BJ (cell line): ENCODE measurements at regions of chr16 and their contacts with region 1.

Region 1: GRCh38 chr16:30844671-30845449 is 49.0 kb downstream of the BCL7C start:
- DNase-seq: peak; percentile 30
- H3K4me3 ChIP-seq: no peak overlapping the region
- H3K27me3 ChIP-seq: no peaks in the 10 kb centered on the region
- CTCF ChIP-seq: peak; percentile 91

Region 2: DNA sequence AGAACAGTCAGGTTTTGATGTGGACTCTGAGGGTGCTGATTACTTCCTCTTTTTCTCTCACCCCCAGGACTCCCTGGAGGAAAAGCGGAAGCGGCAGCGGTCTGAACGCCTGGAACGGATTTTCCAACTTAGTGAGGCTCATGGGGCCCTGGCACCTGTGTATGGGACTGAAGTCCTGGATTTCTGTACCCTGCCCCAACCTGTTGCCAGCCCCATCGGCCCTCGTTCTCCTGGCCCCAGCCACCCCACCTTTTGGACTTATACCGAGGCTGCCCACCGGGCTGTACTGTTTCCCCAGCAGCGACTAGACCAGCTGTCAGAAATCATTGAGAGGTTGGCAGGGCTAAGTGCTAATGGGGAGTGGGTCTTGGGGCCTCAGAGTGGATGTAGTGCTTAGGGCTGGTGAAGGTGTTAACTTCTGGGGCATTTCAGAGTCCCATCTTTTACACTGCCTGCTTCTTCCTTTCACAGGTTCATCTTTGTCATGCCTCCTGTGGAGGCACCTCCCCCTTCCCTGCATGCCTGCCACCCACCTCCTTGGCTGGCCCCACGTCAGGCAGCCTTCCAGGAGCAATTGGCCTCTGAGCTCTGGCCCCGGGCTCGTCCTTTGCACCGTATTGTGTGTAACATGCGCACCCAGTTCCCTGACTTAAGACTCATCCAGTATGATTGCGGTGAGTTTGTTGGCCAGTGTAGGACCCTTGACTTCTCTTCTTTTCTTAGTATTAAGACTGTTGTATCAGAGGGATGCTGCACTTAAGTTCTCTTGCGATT is 115.8 kb before region 1 on chr16:
- CTCF ChIA-PET with region 1: no interaction called
- POLR2A ChIA-PET with region 1: no interaction called
- DNase-seq: no peak
- H3K4me3 ChIP-seq: no peak overlapping the region
- H3K27me3 ChIP-seq: no peaks in the 10 kb centered on the region
- CTCF ChIP-seq: no peak

Region 3: GRCh38 chr16:30747799-30748634 is 96.8 kb before region 1 on chr16 and contains the start of gene PHKG2:
- CTCF ChIA-PET with region 1: no interaction called
- POLR2A ChIA-PET with region 1: no interaction called
- DNase-seq: peak; percentile 95
- H3K4me3 ChIP-seq: peak within 1 kb of the TSS; percentile 99
- H3K27me3 ChIP-seq: no peaks in the 10 kb centered on the region
- CTCF ChIP-seq: no peak
- polyA plus RNA-seq, gene PHKG2: 24.9 and 32.4 TPM in 2 replicates

Region 4: DNA sequence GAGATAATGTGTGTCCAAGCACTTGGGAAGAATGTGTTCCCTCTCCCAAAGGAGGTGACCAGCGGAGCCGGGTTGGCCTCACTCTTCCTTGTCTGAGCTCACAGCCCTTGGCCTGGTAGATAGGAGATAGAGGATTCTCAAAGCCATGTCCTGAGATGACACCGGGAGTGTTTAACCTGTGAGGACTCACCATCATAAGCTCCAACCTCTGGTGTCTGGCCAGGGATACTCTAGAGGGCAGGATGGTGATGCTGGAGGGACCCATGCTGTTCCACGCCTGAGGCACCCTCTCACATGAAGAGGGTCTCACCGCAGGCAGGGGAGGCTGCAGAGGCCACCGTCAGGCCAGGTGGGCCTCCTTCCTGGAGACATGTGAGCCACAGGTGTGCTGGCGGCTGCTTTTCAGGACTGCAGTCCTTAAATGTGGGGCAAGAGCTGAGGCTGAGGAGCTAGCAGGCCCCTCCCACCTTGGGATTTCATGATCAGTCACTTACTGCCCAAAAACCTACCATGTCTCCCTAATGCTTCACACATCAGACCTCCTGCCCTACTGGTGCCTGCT is 51.3 kb before region 1 on chr16:
- CTCF ChIA-PET with region 1: no interaction called
- POLR2A ChIA-PET with region 1: no interaction called
- DNase-seq: no peak
- H3K4me3 ChIP-seq: no peak overlapping the region
- H3K27me3 ChIP-seq: peaks cover 1% of the 10 kb centered on the region; the same call in 1 of the 2 replicates
- CTCF ChIP-seq: no peak

Region 5: DNA sequence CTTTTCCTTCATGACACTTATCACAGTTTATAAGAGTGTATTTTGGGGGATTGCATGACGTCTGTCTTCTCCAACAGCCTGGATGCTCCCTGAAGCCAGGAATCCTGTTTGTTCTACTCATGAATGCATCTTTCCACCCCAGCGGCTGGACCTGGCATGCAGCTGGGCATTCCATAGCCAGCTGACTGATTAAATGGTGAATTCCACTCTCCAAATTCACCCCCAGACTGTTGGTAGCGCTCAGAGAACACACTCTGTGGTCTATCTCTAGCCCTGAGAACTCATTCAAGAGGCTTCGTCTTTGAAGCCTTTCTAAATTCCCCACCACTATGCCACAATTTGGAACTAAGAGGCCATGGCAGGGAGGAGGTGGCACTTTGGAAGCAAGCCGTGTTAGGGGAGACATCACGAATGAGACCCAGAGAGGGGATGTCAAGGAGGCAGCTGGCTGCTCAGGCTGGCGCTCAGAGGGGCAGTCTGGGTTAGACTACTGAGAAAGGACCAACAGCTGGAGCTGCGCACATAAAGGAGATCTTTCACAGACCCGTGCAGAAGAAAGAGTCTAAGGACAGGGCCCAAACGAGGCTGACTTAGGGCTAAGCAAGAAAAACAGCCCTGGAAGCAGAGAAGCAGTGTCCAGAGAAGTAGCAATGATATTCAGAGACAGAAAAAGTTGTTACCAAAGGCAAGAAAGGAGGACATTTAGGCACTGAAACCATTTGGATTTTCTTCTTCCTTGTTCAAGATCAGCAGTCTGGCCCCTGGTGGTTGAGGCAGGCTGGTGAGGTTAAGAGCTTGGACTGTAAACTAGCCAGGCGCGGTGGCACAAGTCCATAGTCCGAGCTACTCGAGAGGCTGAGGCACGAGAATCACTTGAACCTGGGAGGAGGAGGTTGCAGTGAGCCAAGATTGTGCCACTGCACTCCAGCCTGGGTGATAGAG is 15.5 kb before region 1 on chr16:
- CTCF ChIA-PET with region 1: interaction called, 11 read pairs
- POLR2A ChIA-PET with region 1: no interaction called
- DNase-seq: no peak
- H3K4me3 ChIP-seq: no peak overlapping the region
- H3K27me3 ChIP-seq: no peaks in the 10 kb centered on the region
- CTCF ChIP-seq: no peak

Region 6: DNA sequence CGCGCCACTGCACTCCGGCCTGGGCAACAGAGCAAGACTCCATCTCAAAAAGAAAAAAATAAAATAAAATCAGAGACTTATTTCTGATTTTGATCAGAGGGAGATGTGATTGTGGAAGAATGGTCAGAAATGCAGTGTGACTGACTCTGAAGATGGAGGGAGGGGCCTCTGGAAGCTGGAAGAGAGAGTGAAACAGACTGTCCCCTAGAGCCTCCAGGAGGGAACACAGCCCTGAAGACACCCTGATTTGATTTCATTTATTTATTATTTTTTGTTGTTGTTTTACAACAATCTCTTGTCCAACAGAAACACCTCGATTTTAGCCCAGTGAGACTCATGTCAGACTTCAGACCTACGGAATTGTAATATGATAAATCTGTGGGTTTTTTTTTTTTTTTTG is 22.9 kb after region 1 on chr16:
- CTCF ChIA-PET with region 1: interaction called, 18 read pairs
- POLR2A ChIA-PET with region 1: no interaction called
- DNase-seq: no peak
- H3K4me3 ChIP-seq: no peak overlapping the region
- H3K27me3 ChIP-seq: no peaks in the 10 kb centered on the region; the same call in 1 of the 2 replicates
- CTCF ChIP-seq: 0 out of 2 replicates have a peak, but pooled peaks have one; percentile 17

Region 7: DNA sequence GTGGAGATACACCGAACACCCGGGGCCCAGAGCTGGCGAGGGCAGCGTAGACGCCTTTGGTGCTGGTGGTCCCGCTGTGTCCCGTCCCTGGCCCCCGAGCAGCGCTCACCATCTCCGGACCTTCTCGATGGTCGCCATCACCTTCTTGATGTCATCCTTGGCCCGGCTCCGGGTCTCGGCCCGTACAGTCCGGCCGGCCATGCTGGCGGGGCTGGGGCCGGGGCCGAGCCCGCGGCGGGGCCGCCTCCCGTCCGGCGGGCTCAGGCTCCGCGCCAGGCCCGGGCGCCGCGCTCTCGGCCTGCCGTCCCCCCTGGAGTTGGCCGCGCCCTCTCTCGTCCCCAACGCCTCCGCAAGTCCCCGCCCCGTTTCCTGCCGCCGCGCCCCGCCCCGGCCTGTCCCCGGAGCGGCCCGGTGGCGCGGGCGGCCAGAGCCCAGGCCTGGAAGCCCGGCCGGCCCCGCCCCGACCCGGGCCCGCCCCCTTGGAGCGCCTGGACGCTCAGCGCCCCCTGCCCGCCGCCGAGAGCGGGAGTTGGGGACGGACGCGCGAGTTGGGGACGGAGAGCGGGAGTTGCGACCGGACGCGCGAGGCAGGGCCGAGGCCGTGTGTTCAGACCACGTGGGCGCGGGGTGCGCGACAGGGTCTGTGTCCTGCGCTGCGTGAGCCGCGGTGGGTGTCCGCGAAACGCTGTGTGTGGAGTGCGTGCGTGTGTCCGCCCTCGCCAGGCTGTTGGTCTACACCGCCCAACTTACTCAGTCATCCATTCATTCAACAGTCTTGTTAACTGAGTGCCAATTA is 49.1 kb after region 1 on chr16 and contains the start of gene BCL7C:
- CTCF ChIA-PET with region 1: interaction called, 13 read pairs
- POLR2A ChIA-PET with region 1: no interaction called
- DNase-seq: peak; percentile 49
- H3K4me3 ChIP-seq: peak within 1 kb of the TSS; percentile 80
- H3K27me3 ChIP-seq: no peaks in the 10 kb centered on the region
- CTCF ChIP-seq: peak; percentile 41
- polyA plus RNA-seq, gene BCL7C: 27.4 and 27.8 TPM in 2 replicates

Region 8: DNA sequence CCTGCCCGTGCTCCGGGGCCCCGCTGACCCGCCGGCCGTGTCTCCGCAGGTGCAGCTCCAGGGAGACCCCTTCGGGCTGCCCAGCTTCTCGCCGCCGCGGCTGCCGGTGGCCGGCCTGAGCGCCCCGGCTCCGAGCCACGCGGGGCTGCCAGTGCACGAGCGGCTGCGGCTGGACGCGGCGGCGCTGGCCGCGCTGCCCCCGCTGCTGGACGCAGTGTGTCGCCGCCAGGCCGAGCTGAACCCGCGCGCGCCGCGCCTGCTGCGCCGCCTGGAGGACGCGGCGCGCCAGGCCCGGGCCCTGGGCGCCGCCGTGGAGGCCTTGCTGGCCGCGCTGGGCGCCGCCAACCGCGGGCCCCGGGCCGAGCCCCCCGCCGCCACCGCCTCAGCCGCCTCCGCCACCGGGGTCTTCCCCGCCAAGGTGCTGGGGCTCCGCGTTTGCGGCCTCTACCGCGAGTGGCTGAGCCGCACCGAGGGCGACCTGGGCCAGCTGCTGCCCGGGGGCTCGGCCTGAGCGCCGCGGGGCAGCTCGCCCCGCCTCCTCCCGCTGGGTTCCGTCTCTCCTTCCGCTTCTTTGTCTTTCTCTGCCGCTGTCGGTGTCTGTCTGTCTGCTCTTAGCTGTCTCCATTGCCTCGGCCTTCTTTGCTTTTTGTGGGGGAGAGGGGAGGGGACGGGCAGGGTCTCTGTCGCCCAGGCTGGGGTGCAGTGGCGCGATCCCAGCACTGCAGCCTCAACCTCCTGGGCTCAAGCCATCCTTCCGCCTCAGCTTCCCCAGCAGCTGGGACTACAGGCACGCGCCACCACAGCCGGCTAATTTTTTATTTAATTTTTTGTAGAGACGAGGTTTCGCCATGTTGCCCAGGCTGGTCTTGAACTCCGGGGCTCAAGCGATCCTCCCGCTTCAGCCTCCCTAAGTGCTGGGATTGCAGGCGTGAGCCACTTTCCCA is 57.4 kb after region 1 on chr16:
- CTCF ChIA-PET with region 1: interaction called, 55 read pairs
- POLR2A ChIA-PET with region 1: no interaction called
- DNase-seq: no peak
- H3K4me3 ChIP-seq: peak overlapping the region; percentile 34
- H3K27me3 ChIP-seq: no peaks in the 10 kb centered on the region
- CTCF ChIP-seq: no peak

Region 9: GRCh38 chr16:30922420-30922959 is 77.6 kb after region 1 on chr16:
- CTCF ChIA-PET with region 1: interaction called, 19 read pairs
- POLR2A ChIA-PET with region 1: no interaction called
- DNase-seq: peak; percentile 99
- H3K4me3 ChIP-seq: peak overlapping the region; percentile 57
- H3K27me3 ChIP-seq: no peaks in the 10 kb centered on the region
- CTCF ChIP-seq: no peak

Region 10: GRCh38 chr16:30941600-30942425 is 97.0 kb after region 1 on chr16:
- CTCF ChIA-PET with region 1: interaction called, 27 read pairs
- POLR2A ChIA-PET with region 1: no interaction called
- DNase-seq: no peak
- H3K4me3 ChIP-seq: no peak overlapping the region
- H3K27me3 ChIP-seq: no peaks in the 10 kb centered on the region
- CTCF ChIP-seq: peak; percentile 96

Region 11: GRCh38 chr16:31052124-31052523 is 207.3 kb after region 1 on chr16:
- CTCF ChIA-PET with region 1: no interaction called
- POLR2A ChIA-PET with region 1: no interaction called
- DNase-seq: peak; percentile 87
- H3K4me3 ChIP-seq: no peak overlapping the region
- H3K27me3 ChIP-seq: no peaks in the 10 kb centered on the region
- CTCF ChIP-seq: no peak